ENCODE measurements at regions of chr13 and their contacts with region 1.

Region 1: DNA sequence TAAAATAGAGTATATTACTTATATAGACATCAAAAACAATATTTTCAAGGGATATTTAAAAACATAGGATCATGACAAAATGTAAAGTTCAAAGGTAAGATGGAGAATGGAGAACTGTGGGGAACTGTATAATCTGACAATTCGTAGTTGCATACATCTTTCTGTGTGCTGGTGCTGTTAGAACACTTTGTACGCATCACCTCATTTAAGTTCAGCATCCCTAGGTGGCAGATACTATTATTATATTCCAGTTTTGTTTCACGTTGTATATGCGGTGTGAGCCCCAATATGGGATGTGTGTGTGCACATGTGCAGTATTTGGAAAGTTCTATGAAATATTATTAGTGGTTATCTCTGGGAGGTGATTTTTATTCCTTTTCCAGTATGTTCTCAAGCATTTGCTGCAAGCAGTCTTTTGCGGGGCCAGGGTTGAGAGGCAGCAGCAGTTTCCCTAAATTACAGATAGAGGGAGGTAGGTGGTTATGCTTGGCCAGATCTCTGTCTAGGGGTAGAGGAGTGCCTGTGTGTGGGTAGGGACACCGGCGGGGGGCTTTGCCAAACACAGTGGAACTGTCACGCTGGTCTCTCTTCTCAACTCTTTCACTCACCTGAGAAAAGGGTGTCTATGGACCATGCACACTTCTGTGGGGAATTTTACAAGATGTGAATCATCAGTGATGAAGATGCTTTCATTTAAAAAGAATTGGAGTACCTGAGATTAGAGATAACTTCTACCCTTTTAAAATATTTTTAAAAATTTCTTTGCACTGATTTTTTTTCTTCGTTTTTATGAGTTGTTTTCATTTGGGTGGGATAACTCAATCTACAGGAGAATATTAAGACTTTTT is 55.6 kb upstream of the ALOX5AP start:
- DNase-seq: peak; percentile 17
- H3K4me3 Mint-ChIP-seq: no peak overlapping the region
- H3K27ac Mint-ChIP-seq: no peak overlapping the region
- H3K4me1 Mint-ChIP-seq: peaks cover 22% of the 10 kb centered on the region
- H3K27me3 Mint-ChIP-seq: peaks cover 19% of the 10 kb centered on the region

Region 2: GRCh38 chr13:30711375-30711774 is 31.7 kb after region 1 on chr13:
- intact Hi-C with region 1: loop called (anchors 2 kb)
- DNase-seq: no peak
- H3K4me3 Mint-ChIP-seq: peak overlapping the region; percentile 3
- H3K27ac Mint-ChIP-seq: peak overlapping the region; percentile 86
- H3K4me1 Mint-ChIP-seq: peaks cover 31% of the 10 kb centered on the region
- H3K27me3 Mint-ChIP-seq: no peaks in the 10 kb centered on the region

Region 3: DNA sequence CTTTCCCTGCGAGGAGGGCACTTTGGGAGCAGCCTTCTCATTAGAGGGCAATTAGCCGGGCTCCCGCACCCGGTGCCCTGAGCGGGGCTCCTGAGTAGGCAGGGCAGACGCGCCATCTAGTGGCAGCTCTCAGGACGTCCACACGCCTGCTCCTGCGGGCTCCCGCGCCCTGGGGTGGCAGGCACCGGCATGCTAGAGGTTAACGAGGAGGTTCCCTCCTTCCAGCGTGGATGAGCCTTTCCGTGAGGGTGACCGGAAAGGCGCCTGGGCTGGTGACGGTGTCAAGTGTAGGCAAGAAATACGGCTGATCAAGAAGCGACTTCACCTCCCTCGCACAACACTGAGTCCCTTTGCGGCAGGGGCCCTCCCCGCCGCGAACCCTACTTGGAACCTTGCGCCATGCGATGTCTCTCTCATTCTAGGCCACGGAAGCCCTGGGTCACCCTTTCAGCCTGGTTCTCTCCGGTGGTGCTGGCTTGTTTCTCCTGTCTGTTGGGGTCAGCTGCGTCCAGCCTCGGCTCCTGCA is 123.3 kb after region 1 on chr13:
- intact Hi-C with region 1: loop called (anchors 1 kb)
- DNase-seq: peak; percentile 69
- H3K4me3 Mint-ChIP-seq: peak overlapping the region; percentile 47
- H3K27ac Mint-ChIP-seq: no peak overlapping the region
- H3K4me1 Mint-ChIP-seq: peaks cover 28% of the 10 kb centered on the region
- H3K27me3 Mint-ChIP-seq: peaks cover 4% of the 10 kb centered on the region

Measured in activated T-helper 1 cell treated with anti-CD3 and anti-CD28 coated beads, Interleukin-12 subunit alpha, Interleukin-12 subunit beta, Interleukin-2, Interleukin-4 antibody, amounts not matched to agents 30 ng/mL and 10 ng/mL and 1 ng/mL, durations not matched to agents 14 hours and 24 hours and 36 hours (primary cell).